ENCODE measurements at regions of chr12 and their contacts with region 1.

Region 1: GRCh38 chr12:27969624-27970400 is 2.7 kb downstream of the PTHLH start:
- DNase-seq: peak in 41 of 42 donors; percentile 22 to 86 (median 66)

Region 2: DNA sequence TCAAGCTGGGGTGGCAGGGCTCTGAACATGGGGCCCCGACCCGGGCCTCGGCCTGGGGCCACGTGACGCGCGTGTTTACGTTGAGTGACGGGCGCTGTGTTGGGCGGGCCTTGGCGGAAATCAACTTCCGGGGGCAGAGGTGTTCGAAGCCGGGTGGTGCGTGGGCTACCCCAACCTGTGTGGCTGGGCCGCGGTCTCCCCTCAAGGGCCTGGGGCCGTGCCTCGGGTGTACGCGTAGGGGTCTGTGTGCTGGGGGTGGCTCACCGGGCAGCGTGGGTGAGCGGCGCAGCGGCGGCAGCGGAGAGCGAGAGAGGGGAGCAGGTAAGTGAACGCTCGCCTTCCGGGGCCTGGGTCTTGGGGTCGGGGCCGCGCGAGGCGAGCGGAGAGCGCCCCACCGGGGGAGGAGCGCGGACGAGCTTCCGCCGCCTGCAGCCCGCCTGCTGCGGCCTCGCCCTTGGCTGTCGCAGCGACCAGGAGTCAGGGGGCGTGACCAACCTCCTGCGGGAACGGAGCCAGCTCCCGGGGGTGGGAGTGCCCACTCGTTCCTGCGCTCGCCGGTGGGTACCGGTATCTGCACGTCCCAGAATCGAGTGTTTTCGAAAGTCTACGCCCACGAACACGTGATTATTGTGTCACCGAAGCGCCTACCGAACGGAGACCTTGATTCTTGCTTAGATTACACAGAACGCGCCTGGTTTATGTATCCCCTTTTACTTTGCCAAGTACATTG is 220.7 kb after region 1 on chr12 and contains the start of gene CCDC91:
- intact Hi-C with region 1: loop called (anchors 10 kb)
- DNase-seq: peak; percentile 70 to 95 (median 88)

Region 3: GRCh38 chr12:28872654-28873268 is 902.9 kb after region 1 on chr12:
- intact Hi-C with region 1: loop called (anchors 10 kb)
- DNase-seq: peak in 41 of 42 donors; percentile 6 to 81 (median 50)